H1 (cell line): ENCODE measurements at regions of chr5 and their contacts with region 1.

Region 1: GRCh38 chr5:57499262-57500050 is 16.8 kb upstream of the ACTBL2 start:
- DNase-seq: peak in 1 of 2 experiments; percentile 21
- H3K4me3 ChIP-seq: no peak overlapping the region
- H3K27ac ChIP-seq: no peak overlapping the region
- H3K4me1 ChIP-seq: peaks cover 0 to 3% (median under 1%) of the 10 kb centered on the region in 4 experiments; a peak in 2 of 7 replicates
- H3K27me3 ChIP-seq: no peaks in the 10 kb centered on the region
- CTCF ChIP-seq: peak; percentile 41 to 75 (median 65)
- EP300 ChIP-seq: no peak
- POLR2A ChIP-seq: no peak
- RAD21 ChIP-seq: peak; percentile 91

Region 2: DNA sequence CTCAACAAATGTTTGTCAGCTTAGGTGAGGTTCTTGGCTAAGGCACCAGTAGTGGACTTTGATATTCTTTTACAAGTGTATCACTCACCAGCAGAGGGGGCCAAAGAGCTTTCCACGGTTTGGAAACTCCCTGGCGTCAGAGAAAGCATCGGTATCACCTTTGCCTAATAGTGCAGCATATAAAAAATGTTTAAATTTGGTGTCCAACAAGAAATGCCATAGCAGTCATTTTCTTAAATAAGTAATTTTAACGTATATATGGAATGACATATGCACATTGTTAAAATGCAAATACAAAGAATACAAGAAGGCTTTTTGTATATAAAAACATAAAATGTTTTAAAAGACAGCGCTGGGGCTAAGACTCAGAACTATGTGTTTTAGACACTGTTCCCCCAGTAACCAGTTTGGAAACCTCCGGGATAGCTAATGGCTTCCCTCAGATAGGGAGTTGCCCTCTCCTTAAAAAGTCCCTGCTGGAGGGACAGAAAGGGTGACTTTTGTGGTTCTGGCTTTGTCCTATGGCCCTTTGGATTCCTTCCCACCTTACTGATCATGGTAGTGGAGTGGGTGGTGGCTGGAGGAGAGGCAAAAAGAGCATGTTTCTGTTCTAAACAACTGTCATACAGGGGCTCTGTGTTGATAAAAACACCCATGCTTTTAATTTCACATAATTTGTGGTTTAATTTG is 201.0 kb before region 1 on chr5:
- CTCF ChIA-PET with region 1: interaction called, 19 read pairs
- POLR2A ChIA-PET with region 1: no interaction called
- DNase-seq: peak in 1 of 2 experiments; percentile 88
- H3K4me3 ChIP-seq: no peak overlapping the region
- H3K27ac ChIP-seq: no peak overlapping the region
- H3K4me1 ChIP-seq: peaks cover 0 to 10% (median 5%) of the 10 kb centered on the region in 4 experiments; a peak in 3 of 7 replicates
- H3K27me3 ChIP-seq: no peaks in the 10 kb centered on the region
- CTCF ChIP-seq: peak; percentile 16 to 80 (median 76)
- EP300 ChIP-seq: no peak
- POLR2A ChIP-seq: no peak
- RAD21 ChIP-seq: peak; percentile 85 to 87

Region 3: GRCh38 chr5:57513785-57514184 is 14.3 kb after region 1 on chr5:
- CTCF ChIA-PET with region 1: interaction called, 25 read pairs
- POLR2A ChIA-PET with region 1: no interaction called
- DNase-seq: no peak
- H3K4me3 ChIP-seq: no peak overlapping the region
- H3K27ac ChIP-seq: no peak overlapping the region
- H3K4me1 ChIP-seq: no peaks in the 10 kb centered on the region
- H3K27me3 ChIP-seq: no peaks in the 10 kb centered on the region
- CTCF ChIP-seq: no peak
- EP300 ChIP-seq: no peak
- POLR2A ChIP-seq: no peak
- RAD21 ChIP-seq: no peak

Region 4: DNA sequence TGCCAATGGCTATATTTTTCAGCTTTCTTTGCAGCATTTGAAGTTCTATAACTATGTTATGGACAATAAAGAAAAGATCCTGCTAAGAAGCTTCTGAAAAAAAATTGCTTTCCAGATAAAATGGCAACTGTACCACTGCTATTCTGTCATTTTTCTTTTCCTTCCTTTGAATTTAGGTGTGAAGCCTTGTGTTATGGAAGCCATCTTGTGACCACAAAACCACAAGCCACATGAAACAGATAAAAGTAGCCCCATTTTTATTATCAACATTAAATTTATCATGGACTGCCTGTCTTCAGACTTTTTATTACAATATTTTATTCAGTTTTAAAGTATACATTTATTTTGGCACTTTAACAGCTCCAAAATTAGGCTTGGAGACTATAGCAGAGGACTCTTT is 273.1 kb after region 1 on chr5:
- CTCF ChIA-PET with region 1: interaction called, 53 read pairs
- POLR2A ChIA-PET with region 1: no interaction called
- DNase-seq: no peak
- H3K4me3 ChIP-seq: no peak overlapping the region
- H3K27ac ChIP-seq: no peak overlapping the region
- H3K4me1 ChIP-seq: no peaks in the 10 kb centered on the region
- H3K27me3 ChIP-seq: no peaks in the 10 kb centered on the region
- CTCF ChIP-seq: no peak
- EP300 ChIP-seq: no peak
- POLR2A ChIP-seq: no peak
- RAD21 ChIP-seq: no peak

Region 5: DNA sequence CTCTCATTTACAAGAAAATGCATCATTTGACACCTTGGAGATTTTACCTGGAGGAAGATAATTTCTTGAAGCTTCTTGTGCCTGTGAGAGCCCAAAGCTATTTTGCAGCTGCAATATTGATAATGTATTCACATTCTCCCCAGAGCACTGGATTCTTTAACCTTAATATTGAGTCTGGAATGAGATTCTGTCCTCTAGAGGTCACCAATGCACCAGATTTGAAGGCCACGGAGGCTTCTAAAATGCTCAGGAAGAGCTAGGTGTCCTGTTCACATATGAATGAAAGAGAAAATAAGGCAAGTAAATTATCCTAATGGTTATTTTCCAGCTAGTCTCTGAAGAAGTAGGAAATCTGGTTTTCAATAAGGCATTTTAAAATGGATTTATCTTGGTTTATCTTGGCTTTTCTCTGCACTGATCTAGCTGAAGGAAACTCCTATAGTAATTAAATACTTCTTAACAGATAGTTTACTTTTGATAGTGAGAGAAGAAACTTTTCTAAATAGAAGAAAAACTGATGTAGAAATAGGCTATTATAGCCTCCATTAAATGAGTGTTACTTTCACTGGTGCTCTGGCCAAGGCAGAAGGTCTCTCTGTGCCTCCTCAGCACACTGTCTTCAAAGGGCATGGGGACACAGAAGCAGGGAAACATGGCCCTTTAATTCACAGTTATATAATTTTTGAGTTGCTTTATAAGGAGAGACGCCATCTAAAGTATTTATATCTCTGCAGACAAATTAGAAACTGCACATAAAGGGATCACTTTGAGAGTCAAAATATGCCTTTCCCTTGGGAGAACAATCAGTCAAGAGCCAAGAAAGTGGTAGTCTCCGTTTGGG is 280.1 kb after region 1 on chr5:
- CTCF ChIA-PET with region 1: interaction called, 53 read pairs
- POLR2A ChIA-PET with region 1: no interaction called
- DNase-seq: peak in 1 of 2 experiments; percentile 49
- H3K4me3 ChIP-seq: no peak overlapping the region
- H3K27ac ChIP-seq: no peak overlapping the region
- H3K4me1 ChIP-seq: no peaks in the 10 kb centered on the region
- H3K27me3 ChIP-seq: no peaks in the 10 kb centered on the region
- CTCF ChIP-seq: peak in 2 of 3 experiments; percentile 55 to 58; a peak in 3 of 4 replicates
- EP300 ChIP-seq: no peak
- POLR2A ChIP-seq: no peak
- RAD21 ChIP-seq: peak; percentile 90 to 94

Region 6: DNA sequence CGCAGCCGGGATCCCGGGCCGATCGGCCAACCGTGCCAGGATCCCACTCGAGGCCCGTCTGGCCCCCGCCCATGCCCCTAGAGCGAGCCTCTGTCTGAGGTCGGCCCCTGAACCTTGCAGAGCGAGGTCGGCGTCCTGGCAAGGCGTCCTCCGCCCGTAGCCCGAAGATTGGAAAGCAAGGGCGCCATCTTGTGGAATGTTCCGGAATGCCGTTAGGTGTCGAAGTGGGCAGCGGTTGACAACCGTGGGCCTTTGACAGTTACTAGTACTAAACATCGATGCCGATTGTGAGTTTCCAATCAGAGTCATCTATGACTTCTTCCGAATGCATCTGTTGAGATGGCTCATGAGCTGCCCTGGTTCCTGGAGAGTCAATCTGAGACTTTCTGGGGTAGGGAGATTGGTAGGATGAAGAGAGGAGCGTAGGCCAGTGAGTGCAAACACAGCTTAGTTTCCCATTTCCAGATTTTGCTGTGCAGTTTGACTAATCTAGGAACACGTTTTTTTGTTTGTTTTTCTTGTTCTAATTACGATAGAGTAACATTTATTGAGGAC is 961.4 kb after region 1 on chr5:
- CTCF ChIA-PET with region 1: interaction called, 27 read pairs
- POLR2A ChIA-PET with region 1: no interaction called
- DNase-seq: peak; percentile 84 to 96
- H3K4me3 ChIP-seq: peak overlapping the region; percentile 61 to 79 (median 73)
- H3K27ac ChIP-seq: no peak overlapping the region
- H3K4me1 ChIP-seq: peaks cover 0 to 4% (median 3%) of the 10 kb centered on the region in 4 experiments; a peak in 3 of 7 replicates
- H3K27me3 ChIP-seq: peaks cover 0 to 3% (median 2%) of the 10 kb centered on the region in 4 experiments; a peak in 3 of 7 replicates
- CTCF ChIP-seq: peak; percentile 82 to 88 (median 87)
- EP300 ChIP-seq: peak in 1 of 2 experiments; percentile 3; a peak in 1 of 3 replicates
- POLR2A ChIP-seq: no peak
- RAD21 ChIP-seq: peak; percentile 94 to 98